ENCODE measurements at regions of chr5 and their contacts with region 1.

Region 1: GRCh38 chr5:14270209-14270702 is 127.1 kb downstream of the TRIO start:
- DNase-seq: peak in 2 of 4 donors; percentile 38 to 66
- ATAC-seq: peak; percentile 89
- H3K4me3 ChIP-seq: no peak overlapping the region
- H3K27ac ChIP-seq: peak overlapping the region; percentile 40 to 58
- H3K4me1 ChIP-seq: peaks cover 14 to 42% of the 10 kb centered on the region in 2 donors
- H3K27me3 ChIP-seq: no peaks in the 10 kb centered on the region
- CTCF ChIP-seq: peak; percentile 53 to 78

Region 2: GRCh38 chr5:14008819-14009311 is 261.4 kb before region 1 on chr5:
- intact Hi-C with region 1: loop called in 1 of 2 experiments (anchors 10 kb)
- DNase-seq: peak in 3 of 4 donors; percentile 7 to 81 (median 39)
- ATAC-seq: peak; percentile 41
- H3K4me3 ChIP-seq: no peak overlapping the region
- H3K27ac ChIP-seq: peak overlapping the region; percentile 61 to 79
- H3K4me1 ChIP-seq: peaks cover 0 to 25% of the 10 kb centered on the region in 2 donors
- H3K27me3 ChIP-seq: peaks cover 0 to 33% of the 10 kb centered on the region in 2 donors
- CTCF ChIP-seq: no peak

Region 3: DNA sequence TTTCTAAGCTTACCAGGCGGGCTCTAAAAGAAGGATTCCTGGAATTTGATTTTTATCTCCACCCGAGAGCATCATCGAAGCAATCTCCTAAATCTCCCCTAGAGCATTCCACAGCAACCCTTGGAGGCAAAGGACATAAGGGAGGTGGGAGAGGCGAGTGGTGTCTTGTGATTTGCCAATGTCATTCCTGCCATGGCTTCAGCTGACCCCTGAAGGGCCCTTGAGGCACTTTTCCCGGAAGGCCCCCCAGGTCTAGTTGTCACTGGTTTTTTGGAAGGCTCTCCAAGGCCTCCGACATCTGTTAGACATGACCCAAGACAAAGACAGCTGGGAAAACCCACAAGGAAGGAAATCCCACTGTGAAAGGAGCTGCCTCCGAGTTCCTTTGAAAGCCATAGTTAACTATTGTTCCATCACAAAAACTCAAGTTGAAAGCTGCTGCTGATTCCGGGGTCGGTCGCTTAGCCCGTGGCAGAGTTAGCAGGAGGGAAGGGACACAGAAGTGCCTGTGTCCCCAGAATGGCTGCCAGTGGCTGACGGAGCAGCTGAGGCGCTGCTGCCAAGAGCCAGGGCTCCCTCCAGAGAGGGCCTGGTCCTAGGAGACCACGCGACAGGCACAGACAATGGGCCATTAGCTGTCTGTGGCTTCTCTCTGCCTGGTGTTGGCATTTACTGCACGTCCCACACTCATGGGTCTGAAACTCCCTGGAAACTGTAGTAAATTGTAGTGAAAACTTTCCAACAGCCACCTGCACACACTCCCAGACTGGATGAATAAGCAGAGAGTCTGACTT is 151.5 kb before region 1 on chr5:
- intact Hi-C with region 1: loop called in 1 of 2 experiments (anchors 10 kb)
- DNase-seq: no peak
- ATAC-seq: no peak
- H3K4me3 ChIP-seq: no peak overlapping the region
- H3K27ac ChIP-seq: no peak overlapping the region
- H3K4me1 ChIP-seq: no peaks in the 10 kb centered on the region
- H3K27me3 ChIP-seq: no peaks in the 10 kb centered on the region
- CTCF ChIP-seq: no peak

Region 4: DNA sequence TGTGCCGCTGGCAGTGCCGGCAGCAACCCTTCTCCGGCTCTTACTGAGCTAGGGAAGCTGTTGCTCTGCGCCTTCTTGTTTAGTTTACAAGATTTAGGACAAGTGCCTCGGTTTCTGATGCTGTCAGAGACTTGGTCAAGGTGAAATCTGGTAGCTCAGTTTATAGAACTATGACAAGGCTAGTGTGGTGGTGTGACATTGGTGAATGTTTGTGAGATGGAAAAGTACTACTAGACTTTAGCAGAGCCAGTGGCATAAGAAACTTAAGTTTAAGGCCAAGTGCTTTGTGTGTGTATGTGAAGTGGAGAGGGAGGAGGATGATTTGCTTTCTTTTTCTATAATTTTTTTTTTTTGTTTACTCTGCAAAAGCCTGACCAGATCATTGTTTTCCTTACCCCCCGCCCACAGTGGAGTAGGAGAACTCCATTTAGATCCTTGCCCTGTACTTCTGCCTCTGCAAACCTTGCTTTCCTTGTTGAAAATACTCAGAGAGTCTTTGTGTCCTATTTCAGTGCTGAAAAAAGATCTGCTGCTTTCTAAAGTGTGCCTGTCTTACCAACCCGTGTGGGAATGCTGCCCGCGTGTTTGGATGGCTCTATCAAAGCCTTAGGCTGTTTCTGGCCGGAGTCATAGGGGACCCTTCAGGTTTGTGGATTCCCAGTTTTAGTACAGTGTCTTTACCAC is 51.2 kb before region 1 on chr5:
- intact Hi-C with region 1: no loop called
- DNase-seq: no peak
- ATAC-seq: peak; percentile 66
- H3K4me3 ChIP-seq: no peak overlapping the region
- H3K27ac ChIP-seq: peak overlapping the region; percentile 63 to 85
- H3K4me1 ChIP-seq: peaks cover 30 to 59% of the 10 kb centered on the region in 2 donors
- H3K27me3 ChIP-seq: no peaks in the 10 kb centered on the region
- CTCF ChIP-seq: no peak

Region 5: GRCh38 chr5:14560091-14560595 is 289.9 kb after region 1 on chr5:
- intact Hi-C with region 1: no loop called
- DNase-seq: no peak
- ATAC-seq: peak; percentile 39
- H3K4me3 ChIP-seq: no peak overlapping the region
- H3K27ac ChIP-seq: peak overlapping the region in 1 of 2 donors; percentile 70
- H3K4me1 ChIP-seq: peaks cover 0 to 33% of the 10 kb centered on the region in 2 donors
- H3K27me3 ChIP-seq: no peaks in the 10 kb centered on the region
- CTCF ChIP-seq: no peak

Measured in left lung (tissue), 14 donors.